PC-9 (cell line): ENCODE measurements at regions of chr15 and their contacts with region 1.

Region 1: DNA sequence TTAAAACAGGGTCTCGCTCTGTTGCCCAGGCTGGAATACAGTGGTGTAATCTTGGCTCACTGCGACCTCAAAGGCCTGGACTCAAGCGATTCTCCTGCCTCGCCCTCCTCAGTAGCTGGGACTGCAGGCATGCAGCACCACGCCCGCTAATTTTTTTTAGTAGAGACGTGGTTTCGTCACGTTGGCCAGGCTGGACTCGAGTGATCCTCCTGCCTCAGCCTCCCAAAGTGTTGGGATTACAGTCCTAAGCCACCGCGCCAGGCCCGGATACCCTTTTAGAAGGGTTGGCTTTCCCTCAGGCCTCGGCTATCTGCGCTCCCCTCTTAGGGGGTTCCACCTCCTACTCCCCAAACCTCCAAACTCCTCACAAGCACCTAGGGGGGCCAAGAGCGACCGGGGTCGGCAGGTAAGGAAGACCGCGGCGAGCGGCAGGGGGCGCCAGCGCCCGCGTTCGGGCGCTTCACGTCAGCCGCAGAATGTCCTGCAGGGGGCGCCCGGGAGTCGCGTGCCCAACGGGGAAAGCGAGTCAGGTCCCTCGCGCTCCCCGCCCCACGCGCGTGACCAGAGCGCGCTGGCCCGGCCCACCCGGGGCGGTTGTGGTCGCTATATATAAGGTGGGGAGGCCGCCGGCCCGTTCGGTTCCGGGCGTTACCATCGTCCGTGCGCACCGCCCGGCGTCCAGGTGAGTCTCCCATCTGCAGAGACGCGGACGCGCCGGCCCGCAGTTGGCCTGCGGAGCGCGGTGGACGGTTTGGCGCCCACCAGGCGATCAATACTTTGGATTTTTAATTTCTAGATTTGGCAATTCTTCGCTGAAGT is 51.8 kb upstream of the GATM start:
- DNase-seq: peak in 1 of 2 experiments; percentile 74
- H3K4me3 ChIP-seq: peak overlapping the region; percentile 51; the same call in 1 of the 2 replicates
- H3K27ac ChIP-seq: no peak overlapping the region
- H3K4me1 ChIP-seq: peaks cover 11% of the 10 kb centered on the region
- H3K27me3 ChIP-seq: no peaks in the 10 kb centered on the region
- CTCF ChIP-seq: peak; percentile 99

Region 2: DNA sequence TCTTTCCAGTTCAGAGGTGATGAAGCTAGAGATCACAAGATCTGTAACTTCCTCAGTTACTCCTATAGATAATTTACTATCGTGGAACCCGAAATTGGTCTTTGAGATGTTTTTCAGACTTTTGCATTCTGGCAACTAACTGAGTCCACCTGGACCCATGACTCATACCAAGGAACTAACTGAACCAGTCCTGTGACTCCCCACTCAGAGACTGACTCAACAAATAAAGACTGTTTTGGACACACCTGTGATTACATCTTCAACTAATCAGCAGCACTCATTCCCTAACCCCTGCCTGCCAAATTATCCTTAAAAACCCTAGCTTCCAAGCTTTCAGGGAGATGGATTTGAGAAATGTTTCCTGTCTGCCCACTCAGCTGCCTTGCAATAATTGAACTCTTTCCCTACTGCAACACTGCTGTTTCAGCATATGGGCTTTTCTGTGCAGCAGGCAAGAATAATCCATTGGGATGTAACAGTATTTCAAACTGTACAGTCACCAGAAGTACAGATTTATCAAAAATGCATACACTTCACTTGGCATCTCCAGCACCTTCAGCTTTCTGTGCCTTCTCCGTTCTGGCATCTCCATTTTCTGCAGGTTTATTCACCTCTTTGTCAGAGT is 109.5 kb before region 1 on chr15:
- CTCF ChIA-PET with region 1: no interaction called
- POLR2A ChIA-PET with region 1: interaction called, 13 read pairs
- intact Hi-C with region 1: no loop called
- DNase-seq: peak; percentile 16 to 59
- H3K4me3 ChIP-seq: no peak overlapping the region
- H3K27ac ChIP-seq: no peak overlapping the region
- H3K4me1 ChIP-seq: no peaks in the 10 kb centered on the region
- H3K27me3 ChIP-seq: no peaks in the 10 kb centered on the region
- CTCF ChIP-seq: no peak

Region 3: DNA sequence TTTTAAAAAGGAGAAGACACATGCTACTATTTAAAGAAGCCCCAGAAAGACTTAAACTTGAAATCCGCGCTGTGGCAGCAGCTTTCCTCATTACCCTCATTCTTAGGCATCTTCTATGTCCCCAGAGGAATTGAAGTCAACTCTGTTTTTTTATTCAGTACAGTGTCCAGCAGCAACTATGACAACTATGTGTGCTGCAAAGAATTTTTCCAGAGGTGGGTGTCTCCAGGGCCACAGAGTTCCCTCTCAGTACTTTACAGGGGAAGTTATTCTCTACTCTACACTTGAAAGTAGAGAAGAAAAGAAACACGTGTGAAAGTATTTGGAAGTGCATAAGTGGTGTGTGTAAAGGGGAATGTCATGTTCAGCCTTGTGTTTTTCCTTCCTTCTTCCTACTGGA is 83.8 kb before region 1 on chr15:
- CTCF ChIA-PET with region 1: no interaction called
- POLR2A ChIA-PET with region 1: no interaction called
- intact Hi-C with region 1: no loop called
- DNase-seq: no peak
- H3K4me3 ChIP-seq: no peak overlapping the region
- H3K27ac ChIP-seq: peak overlapping the region; percentile 23; the same call in 1 of the 2 replicates
- H3K4me1 ChIP-seq: peaks cover 42% of the 10 kb centered on the region
- H3K27me3 ChIP-seq: no peaks in the 10 kb centered on the region
- CTCF ChIP-seq: no peak